Posterior vena cava (tissue), 2 donors: ENCODE measurements at regions of chr5 and their contacts with region 1.

Region 1: GRCh38 chr5:162882629-162883028 is 554.8 kb upstream of the CCNG1 start:
- DNase-seq: no peak

Region 2: DNA sequence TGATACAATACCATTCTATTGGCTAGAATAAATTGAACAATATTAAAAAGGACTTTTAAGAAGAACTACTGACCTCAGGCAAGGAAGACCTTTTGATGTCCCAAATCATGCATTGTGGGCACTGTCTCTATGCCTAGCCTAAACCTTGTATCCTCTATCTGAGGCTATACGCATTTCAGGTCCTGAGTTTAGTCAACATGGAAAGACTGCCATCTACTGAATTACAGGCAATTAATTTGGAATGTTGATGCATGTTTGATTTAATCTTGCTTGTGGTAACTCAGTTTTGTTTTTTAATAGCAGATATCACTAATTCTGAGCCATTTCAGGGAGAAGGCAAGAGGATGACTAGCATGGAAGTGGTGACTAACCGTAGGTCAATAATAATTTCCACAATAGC is 30.5 kb before region 1 on chr5:
- intact Hi-C with region 1: loop called in 1 of 2 experiments (anchors 1 kb)
- DNase-seq: no peak